Activated CD4-positive, alpha-beta T cell treated with anti-CD3 and anti-CD28 coated beads for 36 hours (primary cell): ENCODE measurements at regions of chr2 and their contacts with region 1.

Region 1: GRCh38 chr2:85611705-85612587 is at the start of gene C2orf68:
- DNase-seq: peak; percentile 94
- ATAC-seq: peak; percentile 76
- H3K4me3 Mint-ChIP-seq: peak within 1 kb of the TSS; percentile 97
- H3K27ac Mint-ChIP-seq: peak within 1 kb of the TSS; percentile 96
- H3K4me1 Mint-ChIP-seq: peaks cover 14% of the 10 kb centered on the region
- H3K27me3 Mint-ChIP-seq: no peaks in the 10 kb centered on the region
- total RNA-seq, gene C2orf68: 33.7 to 47.2 TPM

Region 2: DNA sequence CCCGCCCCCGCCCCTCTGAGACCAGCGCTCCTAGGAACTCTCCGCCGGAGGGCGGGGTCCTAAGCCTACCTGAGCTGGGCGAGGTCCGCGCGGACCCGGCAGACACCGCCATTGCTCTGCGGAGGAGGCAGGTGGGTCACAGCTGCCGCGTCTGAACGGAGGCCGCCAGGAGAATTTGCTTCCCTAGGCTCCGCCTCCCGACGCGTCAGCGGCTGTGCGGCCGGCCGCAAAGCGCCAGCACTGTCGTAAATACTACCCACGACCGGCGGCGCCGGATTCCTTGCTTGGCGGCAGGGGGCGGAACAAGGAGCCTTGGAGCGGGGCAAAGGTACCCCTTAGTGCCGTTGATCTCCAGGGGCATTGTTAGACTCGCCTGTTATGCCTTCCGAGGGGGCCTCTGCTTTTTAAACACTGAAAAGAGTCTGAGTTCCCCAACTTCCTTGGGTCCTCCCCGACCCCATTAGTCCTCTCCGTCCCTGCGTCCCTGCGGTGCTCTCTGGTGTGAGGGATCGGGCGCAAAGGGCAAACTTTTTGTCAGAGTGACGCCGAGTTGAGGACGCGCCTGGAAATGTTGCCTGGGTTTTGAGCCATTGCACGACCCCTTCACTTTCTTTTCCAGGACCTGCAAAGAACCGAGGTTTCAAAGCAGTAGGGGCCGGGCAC is 50.5 kb before region 1 on chr2 and contains the start of gene GGCX:
- CTCF ChIA-PET with region 1: no interaction called
- POLR2A ChIA-PET with region 1: no interaction called
- intact Hi-C with region 1: loop called in 1 of 2 experiments (anchors 1 kb)
- DNase-seq: peak; percentile 98
- ATAC-seq: peak; percentile 94
- H3K4me3 Mint-ChIP-seq: peak within 1 kb of the TSS; percentile 95
- H3K27ac Mint-ChIP-seq: peak within 1 kb of the TSS; percentile 93
- H3K4me1 Mint-ChIP-seq: peaks cover 33% of the 10 kb centered on the region
- H3K27me3 Mint-ChIP-seq: no peaks in the 10 kb centered on the region
- total RNA-seq, gene GGCX: 20.1 to 22.2 TPM

Region 3: DNA sequence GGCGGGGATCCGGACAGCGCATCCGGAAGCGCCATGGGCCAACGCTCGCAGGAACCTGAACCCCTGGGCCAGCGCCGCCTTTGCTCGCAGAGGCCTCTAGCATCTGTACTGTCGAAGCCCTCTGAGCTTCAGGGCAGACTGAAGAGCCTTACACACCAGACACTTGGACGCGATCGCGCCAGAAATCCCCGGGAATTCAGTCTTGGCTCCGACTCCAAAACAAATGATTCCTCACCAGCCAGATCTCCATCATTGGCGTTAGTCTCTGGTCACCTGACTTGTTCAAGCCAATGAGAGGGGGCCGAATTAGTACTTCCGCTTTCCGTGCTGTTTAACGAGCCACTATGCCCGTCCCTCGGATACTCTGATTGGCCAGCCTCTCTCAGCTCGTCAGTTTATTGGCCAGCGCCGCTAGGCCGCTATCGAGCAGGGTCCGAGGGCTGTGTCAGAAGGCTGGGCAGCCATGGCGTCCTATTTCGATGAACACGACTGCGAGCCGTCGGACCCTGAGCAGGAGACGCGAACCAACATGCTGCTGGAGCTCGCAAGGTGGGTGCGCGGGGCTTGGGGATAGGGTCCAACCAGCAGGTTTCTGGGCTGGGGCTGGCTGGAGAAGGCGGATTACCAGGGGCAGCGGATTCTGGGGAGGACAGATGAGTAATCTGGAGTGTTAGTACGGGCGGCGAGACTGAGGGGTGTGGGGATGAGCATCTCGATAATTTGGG is 16.5 kb before region 1 on chr2 and contains the start of gene RNF181:
- CTCF ChIA-PET with region 1: interaction called, 13 read pairs
- POLR2A ChIA-PET with region 1: interaction called, 15 read pairs
- intact Hi-C with region 1: loop called (anchors 1 kb)
- DNase-seq: peak; percentile 94
- ATAC-seq: peak; percentile 100
- H3K4me3 Mint-ChIP-seq: peak within 1 kb of the TSS; percentile 100
- H3K27ac Mint-ChIP-seq: peak within 1 kb of the TSS; percentile 99
- H3K4me1 Mint-ChIP-seq: peaks cover 28% of the 10 kb centered on the region
- H3K27me3 Mint-ChIP-seq: no peaks in the 10 kb centered on the region
- total RNA-seq, gene RNF181: 113 to 140 TPM

Region 4: GRCh38 chr2:86105252-86105968 is 493.5 kb after region 1 on chr2 and contains the start of gene POLR1A:
- CTCF ChIA-PET with region 1: no interaction called
- POLR2A ChIA-PET with region 1: interaction called, 3 read pairs
- intact Hi-C with region 1: loop called (anchors 1 to 10 kb)
- DNase-seq: peak; percentile 90
- ATAC-seq: peak; percentile 75
- H3K4me3 Mint-ChIP-seq: peak within 1 kb of the TSS; percentile 88
- H3K27ac Mint-ChIP-seq: peak within 1 kb of the TSS; percentile 99
- H3K4me1 Mint-ChIP-seq: peaks cover 54% of the 10 kb centered on the region
- H3K27me3 Mint-ChIP-seq: no peaks in the 10 kb centered on the region
- total RNA-seq, gene POLR1A: 38.1 to 45.5 TPM

Region 5: GRCh38 chr2:86440631-86441391 is 828.9 kb after region 1 on chr2 and contains the start of gene KDM3A:
- CTCF ChIA-PET with region 1: no interaction called
- POLR2A ChIA-PET with region 1: no interaction called
- intact Hi-C with region 1: loop called in 1 of 2 experiments (anchors 10 kb)
- DNase-seq: peak; percentile 100
- ATAC-seq: peak; percentile 88
- H3K4me3 Mint-ChIP-seq: peak within 1 kb of the TSS; percentile 90
- H3K27ac Mint-ChIP-seq: peak within 1 kb of the TSS; percentile 99
- H3K4me1 Mint-ChIP-seq: peaks cover 37% of the 10 kb centered on the region
- H3K27me3 Mint-ChIP-seq: no peaks in the 10 kb centered on the region
- total RNA-seq, gene KDM3A: 68.9 to 82.9 TPM